OCI-LY7 (cell line): ENCODE measurements at regions of chr17 and their contacts with region 1.

Region 1: DNA sequence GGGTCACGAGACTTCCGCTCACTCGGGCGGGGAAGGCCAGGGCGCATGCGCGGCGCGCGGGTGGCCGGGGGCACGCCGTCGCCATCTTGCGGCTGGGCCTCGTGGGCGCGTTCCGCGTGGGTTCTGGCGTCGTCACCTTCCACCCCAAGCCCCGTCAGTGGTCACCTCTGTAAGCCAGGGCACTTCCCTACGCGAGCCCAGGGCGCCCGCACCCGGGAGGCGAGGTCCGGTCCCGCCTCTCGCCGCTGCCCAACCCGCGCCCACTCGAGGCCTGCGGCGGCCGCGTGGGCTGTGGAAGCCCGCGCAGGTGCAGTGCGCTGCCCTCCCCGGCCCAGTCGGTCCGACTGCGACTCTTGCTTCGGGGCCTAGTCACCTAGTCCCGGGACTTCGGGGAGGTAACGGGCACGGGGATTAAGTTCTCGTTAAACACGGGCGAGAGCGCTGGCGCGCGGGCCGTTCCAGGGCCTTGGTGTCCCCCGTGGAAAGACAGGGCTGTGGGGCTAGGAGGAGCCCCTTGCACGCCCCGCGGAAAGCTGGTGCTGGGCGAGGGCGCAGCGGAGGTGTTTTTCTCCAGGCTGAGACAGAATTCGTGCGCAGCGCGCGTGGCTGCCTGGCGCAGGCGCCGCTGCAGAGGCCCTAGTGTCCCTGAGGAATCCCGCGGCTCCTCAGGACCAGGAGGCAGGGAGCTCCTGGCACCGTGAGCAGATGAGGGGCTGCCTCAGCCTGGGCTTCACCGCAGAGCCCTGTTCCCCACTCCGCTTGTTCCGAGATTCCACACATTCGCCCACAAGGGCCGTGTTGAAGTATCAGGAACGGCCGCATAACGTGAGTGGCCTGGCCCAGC is 472 bp upstream of the ARHGDIA start:
- DNase-seq: peak; percentile 96
- H3K4me3 ChIP-seq: peak overlapping the region; percentile 97
- H3K27ac ChIP-seq: peak overlapping the region; percentile 84
- H3K4me1 ChIP-seq: peaks cover 64% of the 10 kb centered on the region
- CTCF ChIP-seq: peak; percentile 59

Region 2: DNA sequence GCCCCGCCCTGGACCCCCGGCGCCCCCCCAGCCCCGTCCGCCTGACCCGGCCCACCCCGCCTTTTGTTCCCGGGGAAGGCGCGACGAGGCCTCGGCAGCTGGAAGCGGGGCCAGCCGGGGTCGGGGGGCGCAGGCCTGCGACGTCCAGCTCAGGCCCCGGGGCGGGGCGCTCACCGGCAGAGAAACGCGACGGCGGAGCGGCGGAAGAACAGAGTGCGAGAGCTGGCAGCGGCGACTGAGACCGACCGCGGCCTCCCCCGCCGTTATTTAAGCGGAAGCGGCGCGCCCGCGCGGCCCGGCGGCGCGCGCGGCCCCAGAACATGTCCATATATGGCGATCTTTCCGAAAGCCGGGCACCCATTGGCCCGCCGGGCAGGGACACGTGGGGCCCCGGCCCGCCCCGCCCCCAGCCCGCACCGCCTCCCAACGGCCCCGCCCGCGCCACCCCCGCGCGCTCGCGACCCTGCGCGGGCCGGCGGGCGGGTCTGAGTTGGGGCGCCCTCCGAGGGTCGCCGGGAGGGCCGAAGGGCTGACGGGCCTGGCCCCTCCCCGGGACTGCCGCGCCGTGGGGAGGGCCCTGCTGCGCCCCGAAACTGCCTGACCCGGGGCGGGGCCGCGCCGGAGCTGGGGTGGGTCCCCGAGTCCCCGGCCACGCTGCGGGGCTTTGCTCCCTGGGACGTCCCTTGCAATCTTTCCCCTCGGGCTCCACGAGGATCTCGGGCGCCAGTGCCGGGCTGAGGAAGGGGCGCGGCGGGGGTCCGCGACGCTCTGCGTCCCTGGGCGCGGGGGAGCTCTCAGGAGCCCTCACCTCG is 358.8 kb before region 1 on chr17 and contains the start of gene ACTG1:
- CTCF ChIA-PET with region 1: no interaction called
- POLR2A ChIA-PET with region 1: no interaction called
- intact Hi-C with region 1: loop called (anchors 5 kb)
- DNase-seq: peak; percentile 98
- H3K4me3 ChIP-seq: peak within 1 kb of the TSS; percentile 90
- H3K27ac ChIP-seq: peak within 1 kb of the TSS; percentile 89
- H3K4me1 ChIP-seq: peaks cover 58% of the 10 kb centered on the region
- CTCF ChIP-seq: no peak
- total RNA-seq, gene ACTG1: 2,245 and 2,707 TPM in 2 replicates

Region 3: DNA sequence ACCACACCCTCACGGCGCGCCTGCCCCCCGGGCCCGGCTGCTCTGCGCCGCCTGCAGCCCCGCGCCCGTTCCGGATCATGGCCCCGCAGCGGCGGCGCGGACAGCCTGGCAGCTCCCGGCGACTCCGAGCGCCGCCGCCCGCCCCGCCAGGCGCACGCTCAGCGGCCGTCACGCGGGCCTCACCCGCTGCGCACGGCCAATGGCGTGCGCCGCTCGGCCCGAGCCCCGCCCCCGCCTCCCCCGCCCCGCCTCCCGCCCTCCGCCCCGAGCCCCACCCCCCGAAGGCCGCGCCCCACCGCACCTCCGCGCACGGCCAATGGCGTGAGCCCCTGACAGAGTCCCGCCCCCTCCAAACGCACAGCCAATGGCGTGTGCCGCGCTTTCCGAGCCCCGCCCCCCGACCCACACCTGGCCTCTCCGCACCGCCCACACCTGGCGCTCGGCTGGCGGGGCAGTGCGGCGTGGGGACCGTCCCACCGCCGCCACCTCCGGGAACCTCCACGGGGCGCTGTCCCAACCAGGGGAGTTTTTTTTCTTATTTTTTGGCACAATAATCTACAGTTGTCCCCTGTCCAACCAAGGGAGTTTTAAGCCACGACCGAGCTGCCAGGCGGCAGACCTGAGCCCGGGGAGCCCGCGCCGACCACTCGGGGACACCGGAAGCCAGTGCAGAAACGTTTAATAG is 39.8 kb after region 1 on chr17 and contains the start of gene PCYT2:
- CTCF ChIA-PET with region 1: no interaction called
- POLR2A ChIA-PET with region 1: interaction called, 4 read pairs
- intact Hi-C with region 1: loop called (anchors 1 kb)
- DNase-seq: peak; percentile 98
- H3K4me3 ChIP-seq: peak within 1 kb of the TSS; percentile 85
- H3K27ac ChIP-seq: peak within 1 kb of the TSS; percentile 22
- H3K4me1 ChIP-seq: peaks cover 15% of the 10 kb centered on the region
- CTCF ChIP-seq: peak; percentile 62
- total RNA-seq, gene PCYT2: 70.1 and 70.4 TPM in 2 replicates

Region 4: GRCh38 chr17:81927653-81928543 is 56.3 kb after region 1 on chr17 and contains the start of gene MAFG:
- CTCF ChIA-PET with region 1: interaction called, 4 read pairs
- POLR2A ChIA-PET with region 1: no interaction called
- intact Hi-C with region 1: loop called (anchors 2 kb)
- DNase-seq: peak; percentile 98
- H3K4me3 ChIP-seq: peak within 1 kb of the TSS; percentile 80
- H3K27ac ChIP-seq: peak within 1 kb of the TSS; percentile 60
- H3K4me1 ChIP-seq: peaks cover 34% of the 10 kb centered on the region
- CTCF ChIP-seq: peak; percentile 84
- total RNA-seq, gene MAFG: 16.9 and 22.7 TPM in 2 replicates

Region 5: DNA sequence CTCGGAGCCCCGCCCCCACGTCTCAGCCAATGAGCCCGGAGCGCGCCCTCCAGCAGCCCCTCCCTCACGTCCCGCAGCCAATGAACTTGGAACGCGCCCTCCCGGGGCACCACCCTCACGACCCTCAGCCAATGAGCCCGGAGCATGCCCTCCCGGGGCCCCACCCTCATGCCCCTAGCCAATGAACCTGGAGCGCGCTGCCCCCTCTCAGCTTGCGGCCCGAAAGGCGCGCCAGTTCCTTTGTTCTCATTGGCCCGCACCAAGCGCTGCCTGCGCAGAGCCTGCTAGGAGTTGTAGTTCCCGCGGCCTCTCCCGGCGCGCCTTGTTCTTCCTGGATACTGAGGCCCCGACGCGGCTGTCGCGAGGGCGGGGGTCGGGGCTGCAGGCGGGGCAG is 151.4 kb after region 1 on chr17 and contains the start of gene LRRC45:
- CTCF ChIA-PET with region 1: no interaction called
- POLR2A ChIA-PET with region 1: no interaction called
- intact Hi-C with region 1: loop called (anchors 2 kb)
- DNase-seq: peak; percentile 100
- H3K4me3 ChIP-seq: peak within 1 kb of the TSS; percentile 94
- H3K27ac ChIP-seq: peak within 1 kb of the TSS; percentile 44
- H3K4me1 ChIP-seq: peaks cover 30% of the 10 kb centered on the region
- CTCF ChIP-seq: no peak
- total RNA-seq, gene LRRC45: 52.0 and 62.6 TPM in 2 replicates

Region 6: GRCh38 chr17:82037113-82037888 is 165.7 kb after region 1 on chr17 and contains the start of gene DCXR:
- CTCF ChIA-PET with region 1: no interaction called
- POLR2A ChIA-PET with region 1: interaction called, 3 read pairs
- intact Hi-C with region 1: loop called (anchors 5 kb)
- DNase-seq: peak; percentile 99
- H3K4me3 ChIP-seq: peak within 1 kb of the TSS; percentile 72
- H3K27ac ChIP-seq: peak within 1 kb of the TSS; percentile 70
- H3K4me1 ChIP-seq: peaks cover 19% of the 10 kb centered on the region
- CTCF ChIP-seq: peak; percentile 91
- total RNA-seq, gene DCXR: 138 and 147 TPM in 2 replicates